Activated CD4-positive, alpha-beta T cell treated with anti-CD3 and anti-CD28 coated beads, Interleukin-2, amount 10 ng/mL, durations not matched to agents 7 days and 5 days (primary cell): ENCODE measurements at regions of chr20 and their contacts with region 1.

Region 1: DNA sequence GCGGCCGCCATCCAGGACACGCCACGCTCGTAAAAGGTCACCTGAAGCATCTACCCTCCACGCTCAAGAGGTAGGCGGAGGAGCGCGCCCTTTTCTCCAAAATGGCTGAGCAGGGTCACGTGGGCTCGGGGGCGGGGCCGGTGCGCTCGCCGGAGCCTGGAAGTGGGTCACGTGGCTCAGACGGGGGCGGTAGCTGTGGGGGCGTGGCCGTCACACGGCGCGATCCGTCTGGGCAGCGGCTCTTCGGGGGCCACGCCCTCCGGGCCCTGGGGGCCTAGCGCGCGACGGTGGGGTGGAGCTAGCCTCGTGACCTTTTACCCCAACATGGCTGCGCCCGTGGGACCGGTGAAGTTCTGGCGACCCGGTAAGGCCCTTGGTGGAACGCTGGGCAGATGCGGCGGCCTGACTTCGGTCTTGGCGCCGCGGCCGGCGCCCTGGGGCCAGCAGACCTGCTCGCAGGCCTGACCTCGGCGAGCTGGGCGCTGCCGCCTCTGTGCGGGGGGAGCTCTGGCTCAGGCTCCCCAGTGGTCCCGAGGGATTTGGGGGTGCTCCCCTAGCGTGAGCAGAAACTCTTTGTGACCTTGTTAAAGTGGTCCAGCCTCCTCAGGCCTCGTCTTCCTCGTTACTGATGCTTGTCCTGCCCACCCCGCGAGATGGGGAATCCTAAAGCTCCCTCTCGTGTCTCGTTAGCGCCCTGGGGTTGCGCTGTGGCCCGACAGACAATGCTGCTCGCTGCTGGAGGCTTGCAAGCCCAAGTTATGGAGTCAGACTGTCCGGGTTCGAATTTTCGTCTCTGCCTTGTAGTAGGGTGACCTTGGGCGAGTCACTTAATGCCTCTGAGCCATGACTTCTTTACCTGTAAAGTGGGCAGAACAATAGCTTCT is at the start of gene DHX35:
- DNase-seq: peak; percentile 97
- H3K4me3 Mint-ChIP-seq: peak within 1 kb of the TSS; percentile 80
- H3K27ac Mint-ChIP-seq: peak within 1 kb of the TSS; percentile 94
- H3K4me1 Mint-ChIP-seq: peaks cover 31% of the 10 kb centered on the region
- H3K27me3 Mint-ChIP-seq: no peaks in the 10 kb centered on the region
- total RNA-seq, gene DHX35: 8.8 to 10.3 TPM

Region 2: DNA sequence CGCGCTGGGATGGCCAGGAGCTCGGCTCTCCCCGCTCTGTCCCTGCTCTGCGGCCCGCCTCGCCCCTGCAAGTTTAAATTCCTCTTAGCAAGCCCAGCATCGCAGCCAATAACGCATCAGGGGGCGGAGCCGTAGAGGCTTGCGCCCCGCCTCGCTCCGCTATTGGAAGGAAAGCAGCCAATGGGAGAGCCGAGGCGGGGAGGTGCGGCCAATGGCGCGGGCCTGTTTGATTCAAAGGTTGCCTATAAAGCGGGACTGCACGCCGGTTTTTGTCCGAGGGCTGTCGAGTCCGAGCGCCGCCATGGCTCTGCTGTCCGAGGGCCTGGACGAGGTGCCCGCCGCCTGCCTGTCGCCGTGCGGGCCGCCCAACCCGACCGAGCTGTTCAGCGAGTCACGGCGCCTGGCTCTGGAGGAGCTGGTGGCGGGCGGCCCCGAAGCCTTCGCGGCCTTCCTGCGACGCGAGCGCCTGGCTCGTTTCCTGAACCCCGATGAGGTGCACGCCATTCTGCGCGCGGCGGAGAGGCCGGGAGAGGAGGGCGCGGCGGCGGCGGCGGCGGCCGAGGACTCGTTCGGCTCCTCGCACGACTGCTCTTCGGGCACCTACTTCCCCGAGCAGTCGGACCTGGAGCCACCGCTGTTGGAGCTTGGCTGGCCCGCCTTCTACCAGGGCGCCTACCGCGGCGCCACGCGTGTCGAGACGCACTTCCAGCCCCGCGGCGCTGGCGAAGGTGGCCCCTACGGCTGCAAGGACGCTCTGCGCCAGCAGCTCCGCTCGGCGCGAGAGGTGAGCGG is 35.9 kb before region 1 on chr20 and contains the start of gene FAM83D:
- CTCF ChIA-PET with region 1: interaction called, 10 read pairs
- POLR2A ChIA-PET with region 1: interaction called, 6 read pairs
- DNase-seq: peak; percentile 97
- H3K4me3 Mint-ChIP-seq: peak within 1 kb of the TSS; percentile 88
- H3K27ac Mint-ChIP-seq: peak within 1 kb of the TSS; percentile 88
- H3K4me1 Mint-ChIP-seq: peaks cover 44% of the 10 kb centered on the region
- H3K27me3 Mint-ChIP-seq: no peaks in the 10 kb centered on the region
- total RNA-seq, gene FAM83D: 22.5 to 22.6 TPM